Psoas muscle (tissue), 8 donors: ENCODE measurements at regions of chr17 and their contacts with region 1.

Region 1: GRCh38 chr17:73017658-73018057 is 74.8 kb downstream of the SLC39A11 start:
- DNase-seq: no peak
- ATAC-seq: no peak
- H3K4me3 ChIP-seq: no peak overlapping the region
- H3K27ac ChIP-seq: no peak overlapping the region
- H3K4me1 ChIP-seq: no peaks in the 10 kb centered on the region
- H3K27me3 ChIP-seq: no peaks in the 10 kb centered on the region
- CTCF ChIP-seq: no peak

Region 2: GRCh38 chr17:72069586-72070202 is 948.0 kb before region 1 on chr17:
- intact Hi-C with region 1: loop called in 1 of 2 experiments (anchors 5 kb)
- DNase-seq: no peak
- ATAC-seq: no peak
- H3K4me3 ChIP-seq: no peak overlapping the region
- H3K27ac ChIP-seq: no peak overlapping the region
- H3K4me1 ChIP-seq: no peaks in the 10 kb centered on the region
- H3K27me3 ChIP-seq: no peaks in the 10 kb centered on the region
- CTCF ChIP-seq: no peak

Region 3: DNA sequence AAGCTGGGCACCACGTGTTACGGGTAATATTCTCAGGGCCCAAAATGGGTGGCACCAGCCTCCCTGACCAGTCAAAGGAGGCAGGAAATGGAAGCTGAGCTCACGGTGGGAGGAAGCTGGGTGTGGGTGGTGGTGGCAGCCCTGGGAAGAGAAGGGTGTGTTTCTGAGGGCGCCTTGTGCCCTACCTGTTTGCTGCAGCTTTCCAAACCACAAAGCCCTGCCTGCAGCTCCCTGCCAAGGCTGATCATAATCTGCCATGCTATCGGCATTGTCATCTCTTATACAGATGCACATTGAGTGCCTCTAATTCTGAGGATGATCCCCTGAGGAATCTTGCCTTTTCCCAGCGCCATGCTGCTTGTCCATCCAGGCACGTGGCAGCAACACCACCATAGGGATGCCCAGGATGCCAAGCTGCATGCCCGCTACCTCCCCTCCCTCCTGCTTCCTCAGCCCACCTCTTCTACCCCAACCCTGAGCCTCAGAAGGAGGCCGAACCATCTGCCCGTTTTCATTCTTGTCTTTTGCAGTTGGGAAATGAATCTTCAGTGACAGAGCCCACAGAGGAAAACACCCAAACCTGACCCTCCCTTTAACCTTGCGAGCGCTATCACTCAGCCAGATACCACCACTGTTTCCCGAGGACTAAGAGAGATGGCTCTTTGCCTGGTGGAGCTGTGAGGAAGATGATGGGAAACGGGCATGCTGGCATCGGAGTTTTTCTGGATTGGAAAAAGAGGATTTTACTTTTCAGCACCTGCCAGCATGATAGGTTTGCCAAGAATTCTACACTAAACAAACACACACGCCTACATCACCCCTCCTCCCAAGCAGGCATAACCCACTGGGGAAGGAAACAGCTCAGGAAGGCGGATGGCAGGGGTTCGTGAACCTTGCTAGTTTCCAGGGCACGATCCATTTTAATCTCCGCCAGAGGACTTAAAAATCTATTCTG is 382.7 kb before region 1 on chr17:
- intact Hi-C with region 1: no loop called
- DNase-seq: no peak
- ATAC-seq: no peak
- H3K4me3 ChIP-seq: no peak overlapping the region
- H3K27ac ChIP-seq: no peak overlapping the region
- H3K4me1 ChIP-seq: no peaks in the 10 kb centered on the region
- H3K27me3 ChIP-seq: peaks cover 0 to 5% (median 0%) of the 10 kb centered on the region in 3 donors
- CTCF ChIP-seq: no peak

Region 4: DNA sequence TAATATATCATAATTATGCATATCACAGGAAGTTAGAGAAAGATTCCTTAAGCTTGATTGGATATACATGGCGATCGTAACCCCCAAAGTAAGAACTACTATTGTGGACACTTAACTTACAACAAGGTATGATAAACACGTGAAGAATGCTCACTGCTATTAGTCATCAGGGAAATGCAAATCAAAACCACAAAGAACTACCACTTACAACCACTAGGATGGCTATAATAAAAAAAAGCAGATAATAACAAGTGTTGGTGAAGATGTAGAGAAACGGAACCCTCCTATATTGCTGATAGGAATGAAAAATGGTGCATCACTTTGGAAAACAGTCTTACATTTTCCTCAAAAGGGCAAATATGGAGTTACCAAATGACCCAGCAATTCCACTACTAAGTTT is 191.1 kb before region 1 on chr17:
- intact Hi-C with region 1: no loop called
- DNase-seq: no peak
- ATAC-seq: no peak
- H3K4me3 ChIP-seq: no peak overlapping the region
- H3K27ac ChIP-seq: no peak overlapping the region
- H3K4me1 ChIP-seq: no peaks in the 10 kb centered on the region
- H3K27me3 ChIP-seq: no peaks in the 10 kb centered on the region
- CTCF ChIP-seq: no peak

Region 5: DNA sequence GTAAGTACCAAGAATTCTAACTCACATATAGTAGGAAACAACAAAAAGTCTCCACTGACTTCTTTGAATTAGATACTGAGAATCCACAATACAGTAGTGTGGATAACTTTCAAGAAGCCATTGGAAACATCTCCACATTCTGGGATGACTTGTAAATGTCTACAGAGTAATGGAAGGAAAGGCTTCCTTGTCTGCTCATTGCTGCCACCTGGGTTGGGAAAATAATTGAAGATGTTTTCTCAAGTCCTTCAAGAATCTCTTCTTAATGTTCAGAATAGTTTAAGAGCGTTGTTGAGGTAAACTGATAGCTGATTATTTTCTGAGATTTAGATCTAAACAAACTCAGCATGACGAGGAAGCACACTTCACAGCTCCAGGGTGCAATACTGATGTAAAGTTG is 230.1 kb after region 1 on chr17:
- intact Hi-C with region 1: no loop called
- DNase-seq: no peak
- ATAC-seq: no peak
- H3K4me3 ChIP-seq: no peak overlapping the region
- H3K27ac ChIP-seq: no peak overlapping the region
- H3K4me1 ChIP-seq: no peaks in the 10 kb centered on the region
- H3K27me3 ChIP-seq: no peaks in the 10 kb centered on the region
- CTCF ChIP-seq: peak; percentile 11